Activated CD8-positive, alpha-beta memory T cell treated with anti-CD3 and anti-CD28 coated beads, Interleukin-2, amount 10 ng/mL, durations not matched to agents 7 days and 5 days (primary cell): ENCODE measurements at regions of chr19 and their contacts with region 1.

Region 1: DNA sequence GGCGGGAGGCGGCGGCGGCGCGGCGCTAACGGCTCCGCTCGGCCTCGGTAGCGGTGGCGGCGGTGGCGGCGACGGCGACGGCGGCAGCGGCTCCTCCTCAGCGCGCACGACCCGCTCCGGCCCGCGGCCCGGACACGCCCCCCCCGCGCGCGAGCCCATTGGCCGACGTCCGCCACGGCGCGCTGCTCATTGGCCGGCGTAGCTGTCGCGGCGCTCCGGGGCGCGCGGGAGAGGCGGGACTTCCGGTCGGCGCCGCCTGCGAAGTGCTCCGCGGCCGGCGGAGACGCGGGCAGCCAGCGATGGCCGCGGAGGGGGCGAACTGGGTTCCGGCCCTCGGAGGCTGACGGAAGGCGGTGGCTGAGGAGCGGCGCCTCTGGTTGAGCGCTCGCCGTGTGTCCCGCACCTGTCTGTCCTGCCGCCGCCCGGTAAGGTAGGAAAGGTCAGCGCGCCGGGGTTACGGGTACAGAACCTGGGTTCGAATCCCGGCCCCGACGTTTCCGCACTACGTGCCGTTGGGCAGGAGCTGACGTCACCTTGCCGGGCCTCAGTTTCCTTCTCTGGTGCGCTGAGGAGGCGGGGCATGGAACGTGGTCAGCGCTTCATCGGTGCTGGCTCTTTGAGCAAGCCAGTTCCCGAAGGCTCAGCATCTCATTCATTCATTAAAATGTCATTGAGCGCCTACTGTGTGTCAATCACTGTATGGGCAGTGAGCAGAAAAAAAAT is at the start of gene ELAVL1:
- DNase-seq: peak; percentile 91
- ATAC-seq: peak; percentile 95
- H3K4me3 Mint-ChIP-seq: peak within 1 kb of the TSS; percentile 93
- H3K27ac Mint-ChIP-seq: peak within 1 kb of the TSS; percentile 87
- H3K4me1 Mint-ChIP-seq: peaks cover 39% of the 10 kb centered on the region
- H3K27me3 Mint-ChIP-seq: no peaks in the 10 kb centered on the region
- total RNA-seq, gene ELAVL1: 119 to 150 TPM

Region 2: GRCh38 chr19:7928736-7929701 is 76.7 kb before region 1 on chr19:
- CTCF ChIA-PET with region 1: interaction called, 11 read pairs
- DNase-seq: peak; percentile 75
- ATAC-seq: peak; percentile 38
- H3K4me3 Mint-ChIP-seq: no peak overlapping the region
- H3K27ac Mint-ChIP-seq: peak overlapping the region; percentile 39
- H3K4me1 Mint-ChIP-seq: peaks cover 9% of the 10 kb centered on the region
- H3K27me3 Mint-ChIP-seq: no peaks in the 10 kb centered on the region

Region 3: DNA sequence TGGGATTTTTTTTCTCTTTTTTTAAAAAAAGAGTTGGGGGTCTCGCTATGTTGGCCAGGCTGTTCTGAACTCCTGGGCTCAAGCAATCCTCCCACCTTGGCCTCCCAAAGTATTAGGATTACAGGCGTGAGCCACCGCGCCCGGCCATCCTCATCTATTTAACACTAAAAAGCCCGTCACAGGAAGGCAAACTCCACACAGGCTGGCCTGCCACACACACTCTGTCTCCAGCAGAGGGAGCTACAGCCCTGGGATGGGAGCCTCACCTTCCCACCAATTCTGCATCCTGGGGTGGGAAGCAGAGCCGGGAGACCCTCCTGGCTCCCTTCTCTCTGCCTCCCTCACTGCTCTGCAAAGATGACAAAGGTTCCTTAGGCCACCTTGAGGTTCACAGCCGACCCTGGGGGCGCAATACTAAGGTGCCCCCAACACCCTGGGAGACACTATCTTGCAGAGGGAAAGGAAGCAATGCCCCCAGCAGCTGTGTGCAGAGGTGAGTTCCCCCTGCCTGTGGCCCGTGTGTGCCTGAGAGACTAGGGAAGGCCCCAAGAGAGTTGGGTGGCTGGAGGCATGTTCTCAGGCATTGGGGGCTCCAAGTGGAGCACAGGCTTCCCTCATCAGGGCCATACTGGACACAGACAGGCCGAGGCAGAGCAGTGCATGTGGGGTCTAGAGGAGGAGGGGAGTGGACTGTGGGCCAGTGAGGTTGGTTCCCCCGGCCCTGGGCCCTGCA is 34.8 kb before region 1 on chr19:
- CTCF ChIA-PET with region 1: interaction called, 19 read pairs
- DNase-seq: no peak
- ATAC-seq: peak; percentile 51
- H3K4me3 Mint-ChIP-seq: no peak overlapping the region
- H3K27ac Mint-ChIP-seq: no peak overlapping the region
- H3K4me1 Mint-ChIP-seq: peaks cover 3% of the 10 kb centered on the region
- H3K27me3 Mint-ChIP-seq: no peaks in the 10 kb centered on the region

Region 4: GRCh38 chr19:8028951-8029491 is 23.3 kb after region 1 on chr19:
- CTCF ChIA-PET with region 1: no interaction called
- DNase-seq: no peak
- ATAC-seq: no peak
- H3K4me3 Mint-ChIP-seq: no peak overlapping the region
- H3K27ac Mint-ChIP-seq: no peak overlapping the region
- H3K4me1 Mint-ChIP-seq: no peaks in the 10 kb centered on the region
- H3K27me3 Mint-ChIP-seq: peaks cover 5% of the 10 kb centered on the region

Region 5: GRCh38 chr19:8039231-8039630 is 33.5 kb after region 1 on chr19:
- CTCF ChIA-PET with region 1: no interaction called
- DNase-seq: no peak
- ATAC-seq: no peak
- H3K4me3 Mint-ChIP-seq: no peak overlapping the region
- H3K27ac Mint-ChIP-seq: no peak overlapping the region
- H3K4me1 Mint-ChIP-seq: no peaks in the 10 kb centered on the region
- H3K27me3 Mint-ChIP-seq: peaks cover 12% of the 10 kb centered on the region

Region 6: DNA sequence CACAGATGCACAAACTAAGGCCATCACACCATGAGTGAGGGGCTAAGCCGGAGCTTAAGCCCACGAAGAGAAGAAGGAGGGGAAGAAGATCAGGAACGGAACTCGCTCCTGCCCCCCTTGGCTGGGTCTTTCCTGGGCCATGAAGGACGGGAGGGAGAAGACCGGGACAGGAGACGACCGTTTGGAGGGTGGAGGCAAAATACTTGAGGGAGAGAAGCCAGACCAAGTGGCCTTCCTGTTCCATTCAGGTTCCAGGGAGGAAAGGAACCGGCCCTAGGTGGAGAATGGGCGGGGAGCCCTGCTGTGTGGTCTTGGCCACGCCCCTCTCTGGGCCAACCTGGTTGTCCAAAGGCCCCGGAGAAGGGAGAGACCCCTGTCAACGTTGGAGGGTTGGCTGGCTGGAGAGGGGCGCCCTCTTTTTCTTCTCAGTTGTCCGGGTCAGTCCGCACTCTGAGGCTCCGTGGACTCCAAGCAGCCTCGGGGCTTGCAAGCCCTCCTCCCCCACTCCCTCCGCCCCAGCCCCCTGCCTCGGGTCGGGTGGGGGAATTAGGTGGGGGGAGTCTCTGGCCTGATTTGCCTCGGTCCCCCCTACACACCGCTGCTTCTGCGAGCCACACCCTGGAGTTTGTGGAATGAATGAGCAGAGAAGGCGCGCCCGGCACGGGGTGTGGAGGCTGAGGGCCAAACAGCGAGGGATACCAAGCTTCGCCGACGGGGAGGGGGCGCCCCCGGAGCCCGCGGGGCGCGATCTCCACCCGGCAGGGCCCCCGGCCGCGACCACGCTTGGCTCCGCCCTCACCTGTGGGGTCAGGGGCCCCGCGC is 142.9 kb after region 1 on chr19:
- CTCF ChIA-PET with region 1: no interaction called
- DNase-seq: no peak
- ATAC-seq: no peak
- H3K4me3 Mint-ChIP-seq: no peak overlapping the region
- H3K27ac Mint-ChIP-seq: no peak overlapping the region
- H3K4me1 Mint-ChIP-seq: peaks cover 3% of the 10 kb centered on the region
- H3K27me3 Mint-ChIP-seq: peaks cover 53% of the 10 kb centered on the region